Activated B cell treated with CpG ODN at 0.5 μM for 24 hours (primary cell): ENCODE measurements at regions of chr1 and their contacts with region 1.

Region 1: DNA sequence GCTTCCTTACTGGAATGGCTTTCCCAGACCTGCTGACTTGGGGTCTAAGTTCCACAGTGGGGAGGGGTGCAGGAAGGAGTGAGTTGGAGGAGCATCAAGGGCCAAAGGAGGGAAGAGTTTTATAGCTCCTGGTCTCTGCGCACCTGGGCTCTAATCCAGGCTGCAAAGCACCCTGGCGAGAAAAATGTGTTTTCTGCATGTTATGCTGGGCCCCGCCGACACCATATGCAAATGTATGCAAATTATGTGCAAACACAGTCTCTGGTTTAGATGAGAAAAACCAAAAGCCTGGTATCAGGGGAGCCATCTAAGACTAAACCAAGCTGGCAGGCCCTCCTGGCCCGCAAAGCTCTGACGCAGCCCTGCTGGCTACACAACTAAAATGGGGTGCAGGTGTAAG is 95.0 kb downstream of the VWA5B1 start:
- DNase-seq: no peak
- ATAC-seq: no peak
- H3K4me3 Mint-ChIP-seq: no peak overlapping the region
- H3K27ac Mint-ChIP-seq: no peak overlapping the region
- H3K4me1 Mint-ChIP-seq: peaks cover 12% of the 10 kb centered on the region
- H3K27me3 Mint-ChIP-seq: peaks cover 49% of the 10 kb centered on the region
- CTCF ChIP-seq: no peak

Region 2: DNA sequence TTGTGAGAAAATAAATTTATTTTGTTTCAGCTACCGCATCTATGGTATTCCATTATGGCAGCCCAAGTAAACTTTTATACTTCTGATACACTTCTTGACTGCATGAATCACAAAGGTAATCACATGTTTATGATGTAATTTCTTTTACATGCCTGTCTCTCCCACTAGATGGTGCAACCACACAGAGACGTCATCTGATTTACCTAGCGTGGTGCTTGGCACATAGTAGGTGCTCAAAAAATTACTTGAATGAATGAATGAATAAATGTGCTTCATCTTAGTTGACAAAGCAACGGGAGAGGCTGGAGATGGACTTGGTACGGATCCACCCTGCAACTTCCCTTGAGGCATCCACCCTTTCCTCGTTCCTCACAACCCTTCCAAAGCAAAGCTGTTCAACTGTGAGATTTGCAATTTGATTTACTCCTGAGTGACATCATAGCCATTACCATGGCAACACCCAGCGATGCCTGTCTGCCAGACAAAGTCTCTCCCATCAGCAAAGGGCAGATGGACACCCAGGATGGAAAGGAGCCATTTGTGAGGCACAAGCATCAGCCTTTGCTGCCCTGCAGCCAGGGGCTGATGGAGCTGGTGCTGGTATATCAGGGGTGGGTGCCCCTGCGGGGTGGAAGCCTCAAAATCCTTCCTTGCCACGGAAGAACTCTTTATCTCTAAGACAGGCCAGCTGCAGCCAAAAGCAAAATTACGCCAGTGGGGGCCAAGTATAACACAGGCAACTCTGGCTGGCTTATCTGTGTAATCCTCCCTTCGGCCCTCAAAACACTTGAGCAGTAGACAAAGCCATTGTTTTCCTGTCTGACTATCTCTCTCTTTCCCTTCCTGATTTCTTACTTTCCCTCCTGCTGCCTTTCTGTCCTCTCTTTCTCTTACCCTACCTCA is 113.9 kb before region 1 on chr1:
- CTCF ChIA-PET with region 1: no interaction called
- POLR2A ChIA-PET with region 1: no interaction called
- intact Hi-C with region 1: no loop called
- DNase-seq: no peak
- ATAC-seq: no peak
- H3K4me3 Mint-ChIP-seq: no peak overlapping the region
- H3K27ac Mint-ChIP-seq: no peak overlapping the region
- H3K4me1 Mint-ChIP-seq: no peaks in the 10 kb centered on the region
- H3K27me3 Mint-ChIP-seq: peaks cover 29% of the 10 kb centered on the region
- CTCF ChIP-seq: no peak

Region 3: DNA sequence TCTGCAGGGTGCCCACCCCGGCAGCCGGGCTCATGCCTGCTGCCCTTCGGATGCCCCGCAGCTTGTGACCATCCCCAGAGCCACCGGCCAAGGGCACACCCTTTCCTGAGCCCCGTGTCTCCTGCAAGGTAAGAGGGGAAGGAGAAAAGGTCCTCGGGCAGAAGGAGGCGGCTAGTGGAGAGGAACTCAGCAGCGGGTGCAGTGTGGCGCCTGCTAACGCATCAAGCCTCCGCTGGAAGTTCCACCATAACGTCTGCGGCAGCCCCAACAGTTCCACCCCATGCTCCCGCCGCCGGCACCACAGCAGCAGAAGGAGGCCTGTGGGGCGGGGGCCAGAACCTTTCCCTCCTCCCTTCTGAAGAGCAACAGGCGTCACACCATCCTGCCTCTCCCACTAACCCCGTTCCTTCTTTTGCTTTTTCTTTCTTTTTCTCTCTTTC is 94.0 kb before region 1 on chr1:
- CTCF ChIA-PET with region 1: no interaction called
- POLR2A ChIA-PET with region 1: no interaction called
- intact Hi-C with region 1: no loop called
- DNase-seq: no peak
- ATAC-seq: no peak
- H3K4me3 Mint-ChIP-seq: peak overlapping the region; percentile 36
- H3K27ac Mint-ChIP-seq: no peak overlapping the region
- H3K4me1 Mint-ChIP-seq: peaks cover 10% of the 10 kb centered on the region
- H3K27me3 Mint-ChIP-seq: peaks cover 54% of the 10 kb centered on the region
- CTCF ChIP-seq: no peak

Region 4: GRCh38 chr1:20405893-20406604 is 20.4 kb after region 1 on chr1:
- CTCF ChIA-PET with region 1: no interaction called
- POLR2A ChIA-PET with region 1: no interaction called
- intact Hi-C with region 1: loop called (anchors 2 kb)
- DNase-seq: no peak
- ATAC-seq: peak; percentile 59
- H3K4me3 Mint-ChIP-seq: no peak overlapping the region
- H3K27ac Mint-ChIP-seq: peak overlapping the region; percentile 38
- H3K4me1 Mint-ChIP-seq: peaks cover 36% of the 10 kb centered on the region
- H3K27me3 Mint-ChIP-seq: peaks cover 35% of the 10 kb centered on the region
- CTCF ChIP-seq: no peak